Right lobe of liver (tissue), 6 donors: ENCODE measurements at regions of chr14 and their contacts with region 1.

Region 1: GRCh38 chr14:54691525-54692283 is 124.8 kb downstream of the SAMD4A start:
- DNase-seq: peak; percentile 79 to 81 (median 79)
- ATAC-seq: peak; percentile 95 to 99 (median 98)
- H3K4me3 ChIP-seq: no peak overlapping the region
- H3K27ac ChIP-seq: no peak overlapping the region
- H3K4me1 ChIP-seq: no peaks in the 10 kb centered on the region
- H3K27me3 ChIP-seq: no peaks in the 10 kb centered on the region
- CTCF ChIP-seq: peak; percentile 78 to 88 (median 86)
- POLR2A ChIP-seq: no peak

Region 2: DNA sequence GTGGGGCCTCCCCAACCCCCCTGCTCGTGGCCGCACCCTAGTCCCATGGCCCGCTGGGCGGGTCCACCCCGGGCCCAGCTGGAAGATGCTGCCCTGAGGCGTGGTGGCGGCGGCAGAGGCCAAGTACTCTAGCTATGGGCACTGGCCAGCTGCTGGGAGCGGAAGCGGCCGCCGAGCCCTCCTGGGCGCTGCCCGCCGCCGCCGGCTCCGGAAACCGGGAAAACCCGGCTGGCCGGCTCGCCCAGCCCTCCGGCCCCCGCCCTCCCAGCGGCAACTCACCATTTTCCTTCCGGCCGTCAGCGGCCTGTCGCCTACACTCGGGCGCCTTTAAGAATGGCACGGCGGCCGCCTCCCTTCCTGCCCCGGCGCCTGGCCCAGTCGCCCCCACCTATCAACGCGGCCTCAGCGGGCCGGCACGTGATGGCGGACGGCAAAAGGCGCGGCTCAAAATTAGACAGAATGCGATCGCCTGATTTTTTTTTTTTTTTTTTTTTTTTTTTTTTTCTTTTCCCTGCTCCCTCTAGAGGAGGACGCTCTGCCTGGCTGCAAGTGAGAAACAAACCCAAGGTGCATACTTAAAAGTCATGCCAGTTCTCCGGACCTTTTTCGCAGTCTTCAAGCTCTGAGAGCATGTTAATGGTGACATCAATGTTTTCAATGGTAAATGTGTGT is 202.9 kb before region 1 on chr14 and contains the start of gene GMFB:
- intact Hi-C with region 1: no loop called
- DNase-seq: peak; percentile 91 to 94 (median 93)
- ATAC-seq: peak; percentile 94 to 99 (median 97)
- H3K4me3 ChIP-seq: peak within 1 kb of the TSS; percentile 86 to 98 (median 90)
- H3K27ac ChIP-seq: peak within 1 kb of the TSS; percentile 73 to 98 (median 87)
- H3K4me1 ChIP-seq: peaks cover 0 to 14% (median 6%) of the 10 kb centered on the region in 4 donors
- H3K27me3 ChIP-seq: no peaks in the 10 kb centered on the region
- CTCF ChIP-seq: peak; percentile 13 to 47 (median 42)
- POLR2A ChIP-seq: peak; percentile 93
- total RNA-seq, gene GMFB: 13.8 to 36.3 (median 22.5) TPM

Region 3: DNA sequence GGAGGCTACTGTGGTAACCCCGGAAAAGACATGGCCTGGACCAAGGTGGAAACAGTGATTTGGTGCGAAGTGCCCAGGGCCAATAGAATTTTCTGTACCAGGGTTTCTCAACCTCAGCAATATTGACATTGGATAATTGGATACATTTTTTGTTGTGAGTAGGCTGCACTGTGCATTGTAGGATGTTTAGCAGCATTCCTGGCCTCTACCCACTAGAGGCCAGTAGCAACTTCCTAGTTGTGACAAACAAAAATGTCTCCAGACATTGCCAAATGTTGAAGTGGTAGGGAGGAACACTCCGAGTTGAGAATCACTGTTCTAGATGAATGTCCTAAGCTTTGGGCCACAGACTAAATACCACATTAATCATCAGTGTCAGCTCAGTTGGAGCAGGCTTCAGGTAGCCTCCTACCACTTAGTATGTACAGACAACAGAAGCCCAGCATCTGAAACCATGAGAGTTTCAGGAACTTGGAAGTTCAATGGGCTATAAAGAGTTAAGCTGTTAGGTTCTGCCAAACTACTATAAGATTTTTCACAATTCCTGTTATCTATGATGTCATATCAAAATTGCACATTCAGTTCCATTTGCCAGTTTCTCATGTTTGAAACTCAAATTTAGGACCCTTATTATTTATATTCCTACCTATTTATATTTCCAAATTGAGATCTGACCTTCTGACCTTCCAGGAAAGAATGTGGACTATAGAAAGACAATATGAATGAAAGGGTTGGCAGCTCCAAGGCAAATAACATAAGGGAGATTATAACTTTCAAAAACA is 188.0 kb before region 1 on chr14:
- intact Hi-C with region 1: no loop called
- DNase-seq: no peak
- ATAC-seq: peak; percentile 30 to 67 (median 52)
- H3K4me3 ChIP-seq: no peak overlapping the region
- H3K27ac ChIP-seq: no peak overlapping the region
- H3K4me1 ChIP-seq: no peaks in the 10 kb centered on the region
- H3K27me3 ChIP-seq: no peaks in the 10 kb centered on the region
- CTCF ChIP-seq: peak; percentile 12 to 47 (median 38)
- POLR2A ChIP-seq: no peak

Region 4: GRCh38 chr14:54566410-54567223 is 125.1 kb before region 1 on chr14 and contains the start of gene SAMD4A:
- intact Hi-C with region 1: loop called (anchors 5 to 10 kb)
- DNase-seq: peak; percentile 74 to 84 (median 78)
- ATAC-seq: peak; percentile 22 to 42 (median 30)
- H3K4me3 ChIP-seq: peak within 1 kb of the TSS; percentile 51 to 73 (median 66)
- H3K27ac ChIP-seq: peak within 1 kb of the TSS; percentile 96 to 99 (median 98)
- H3K4me1 ChIP-seq: peaks cover 0 to 17% (median 0%) of the 10 kb centered on the region in 4 donors
- H3K27me3 ChIP-seq: no peaks in the 10 kb centered on the region
- CTCF ChIP-seq: peak in 3 of 4 donors; percentile 17 to 39 (median 21)
- POLR2A ChIP-seq: peak; percentile 48
- total RNA-seq, gene SAMD4A: 16.7 to 31.9 (median 21.1) TPM